MCF 10A (cell line): ENCODE measurements at regions of chr2 and their contacts with region 1.

Region 1: GRCh38 chr2:132416081-132416881 is at the start of gene GPR39:
- DNase-seq: peak; percentile 98
- H3K4me3 Mint-ChIP-seq: peak within 1 kb of the TSS; percentile 78
- H3K27ac Mint-ChIP-seq: peak within 1 kb of the TSS; percentile 91
- H3K4me1 Mint-ChIP-seq: peaks cover 43% of the 10 kb centered on the region
- H3K27me3 Mint-ChIP-seq: no peaks in the 10 kb centered on the region
- CTCF ChIP-seq: no peak
- total RNA-seq, gene GPR39: 7.2 and 7.7 TPM in 2 replicates

Region 2: DNA sequence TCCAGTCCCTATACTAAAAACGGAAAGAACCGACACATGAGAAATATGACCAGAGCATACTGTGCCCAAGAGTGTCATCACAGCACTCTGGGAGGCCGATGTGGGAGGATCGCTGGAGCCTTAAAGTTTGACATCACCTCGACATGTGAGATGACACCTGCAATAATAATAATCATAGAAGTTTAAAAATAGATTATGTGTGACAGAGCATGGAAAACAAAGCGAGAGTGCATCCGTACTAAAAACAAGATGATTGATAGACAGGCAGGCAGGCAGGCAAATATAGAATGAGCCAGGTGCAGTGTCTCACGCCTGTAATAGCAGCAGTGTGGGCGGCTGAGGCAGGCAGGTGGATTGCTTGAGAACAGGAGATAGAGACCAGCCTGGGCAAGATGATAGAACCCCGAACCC is 139.7 kb before region 1 on chr2:
- CTCF ChIA-PET with region 1: no interaction called
- POLR2A ChIA-PET with region 1: no interaction called
- intact Hi-C with region 1: no loop called
- DNase-seq: no peak
- H3K4me3 Mint-ChIP-seq: no peak overlapping the region
- H3K27ac Mint-ChIP-seq: no peak overlapping the region
- H3K4me1 Mint-ChIP-seq: no peaks in the 10 kb centered on the region
- H3K27me3 Mint-ChIP-seq: no peaks in the 10 kb centered on the region
- CTCF ChIP-seq: no peak

Region 3: GRCh38 chr2:132400169-132400900 is 15.9 kb before region 1 on chr2:
- CTCF ChIA-PET with region 1: interaction called, 18 read pairs
- POLR2A ChIA-PET with region 1: interaction called, 34 read pairs
- intact Hi-C with region 1: loop called (anchors 1 kb)
- DNase-seq: peak; percentile 85
- H3K4me3 Mint-ChIP-seq: no peak overlapping the region
- H3K27ac Mint-ChIP-seq: no peak overlapping the region
- H3K4me1 Mint-ChIP-seq: peaks cover 15% of the 10 kb centered on the region
- H3K27me3 Mint-ChIP-seq: no peaks in the 10 kb centered on the region
- CTCF ChIP-seq: peak; percentile 15

Region 4: GRCh38 chr2:132430900-132431294 is 14.6 kb after region 1 on chr2:
- CTCF ChIA-PET with region 1: interaction called, 8 read pairs
- POLR2A ChIA-PET with region 1: interaction called, 18 read pairs
- intact Hi-C with region 1: no loop called
- DNase-seq: peak; percentile 90
- H3K4me3 Mint-ChIP-seq: no peak overlapping the region
- H3K27ac Mint-ChIP-seq: peak overlapping the region; percentile 76
- H3K4me1 Mint-ChIP-seq: peaks cover 27% of the 10 kb centered on the region
- H3K27me3 Mint-ChIP-seq: no peaks in the 10 kb centered on the region
- CTCF ChIP-seq: no peak

Region 5: GRCh38 chr2:132438691-132439090 is 22.4 kb after region 1 on chr2:
- CTCF ChIA-PET with region 1: interaction called, 8 read pairs
- POLR2A ChIA-PET with region 1: interaction called, 9 read pairs
- intact Hi-C with region 1: loop called (anchors 1 kb)
- DNase-seq: peak; percentile 97
- H3K4me3 Mint-ChIP-seq: peak overlapping the region; percentile 55
- H3K27ac Mint-ChIP-seq: peak overlapping the region; percentile 95
- H3K4me1 Mint-ChIP-seq: peaks cover 33% of the 10 kb centered on the region
- H3K27me3 Mint-ChIP-seq: no peaks in the 10 kb centered on the region
- CTCF ChIP-seq: no peak